ENCODE measurements at regions of chr6 and their contacts with region 1.

Region 1: GRCh38 chr6:158207422-158207788 is 39.3 kb downstream of the GTF2H5 start:
- DNase-seq: no peak
- H3K4me3 ChIP-seq: no peak overlapping the region
- H3K4me3 Mint-ChIP-seq: no peak overlapping the region
- H3K27ac Mint-ChIP-seq: no peak overlapping the region
- H3K4me1 ChIP-seq: no peaks in the 10 kb centered on the region
- H3K4me1 Mint-ChIP-seq: no peaks in the 10 kb centered on the region
- H3K27me3 ChIP-seq: no peaks in the 10 kb centered on the region
- H3K27me3 Mint-ChIP-seq: no peaks in the 10 kb centered on the region
- CTCF ChIP-seq: no peak

Region 2: DNA sequence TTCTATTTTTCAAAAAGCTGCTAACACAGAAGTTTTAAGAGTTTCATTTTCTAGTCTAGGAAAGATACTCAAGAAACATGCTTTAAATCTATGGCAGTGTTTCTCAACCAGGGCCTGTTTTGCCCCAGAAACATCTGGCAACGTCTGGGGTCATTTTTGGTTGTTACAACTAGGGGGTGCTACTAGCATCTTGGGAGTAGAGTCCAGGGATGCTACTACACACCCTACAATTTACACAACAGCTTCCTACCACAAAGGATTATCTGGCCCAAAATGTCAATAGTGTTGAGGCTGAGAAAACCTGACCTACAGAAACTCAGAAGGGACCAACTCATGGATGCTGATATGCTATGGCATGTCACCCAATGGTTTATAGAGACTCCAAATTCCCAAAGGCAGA is 63.7 kb before region 1 on chr6:
- CTCF ChIA-PET with region 1: no interaction called
- POLR2A ChIA-PET with region 1: no interaction called
- intact Hi-C with region 1: loop called (anchors 10 kb)
- DNase-seq: peak in 1 of 2 experiments; percentile 44
- H3K4me3 ChIP-seq: no peak overlapping the region
- H3K4me3 Mint-ChIP-seq: no peak overlapping the region
- H3K27ac Mint-ChIP-seq: no peak overlapping the region
- H3K4me1 ChIP-seq: 0 out of 2 replicates have a peak, but pooled peaks cover 3% of the 10 kb centered on the region
- H3K4me1 Mint-ChIP-seq: no peaks in the 10 kb centered on the region
- H3K27me3 ChIP-seq: no peaks in the 10 kb centered on the region
- H3K27me3 Mint-ChIP-seq: no peaks in the 10 kb centered on the region
- CTCF ChIP-seq: peak; percentile 19 to 51

Measured in Caco-2 (cell line).